Caco-2 (cell line): ENCODE measurements at regions of chr9 and their contacts with region 1.

Region 1: DNA sequence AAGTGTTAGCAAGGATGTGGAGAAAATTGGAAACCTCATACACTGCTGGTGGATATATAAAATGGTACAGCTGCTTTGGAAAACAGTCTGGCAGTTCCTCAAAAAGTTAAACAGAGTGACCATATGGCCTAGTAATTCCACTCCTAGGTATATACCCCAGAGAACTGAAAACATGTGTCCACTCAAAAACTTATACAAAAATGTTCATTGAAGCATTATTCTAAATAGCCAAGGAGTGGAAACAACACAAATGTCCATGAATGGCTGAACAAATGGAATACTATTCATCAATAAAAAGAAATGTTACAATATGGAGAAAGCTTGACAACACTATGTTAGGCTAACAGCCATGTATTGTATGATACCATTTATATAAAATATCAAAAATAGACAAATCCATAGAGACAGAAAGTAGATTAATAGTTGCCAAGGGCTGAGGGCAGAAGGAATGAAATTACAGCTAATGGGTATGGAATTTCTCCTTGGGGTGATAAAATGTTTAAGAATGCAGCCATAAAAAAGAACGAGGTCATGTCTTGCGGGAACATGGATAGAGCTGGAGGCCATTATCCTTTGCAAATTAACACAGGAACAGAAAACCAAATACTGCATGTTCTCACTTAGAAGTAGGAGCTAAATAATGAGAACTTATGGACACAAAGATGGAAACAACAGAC is 33.6 kb upstream of the FBP1 start:
- DNase-seq: no peak
- H3K4me3 ChIP-seq: no peak overlapping the region
- H3K4me3 Mint-ChIP-seq: no peak overlapping the region
- H3K27ac Mint-ChIP-seq: peak overlapping the region; percentile 27
- H3K4me1 ChIP-seq: peaks cover 32% of the 10 kb centered on the region
- H3K4me1 Mint-ChIP-seq: peaks cover 21% of the 10 kb centered on the region
- H3K27me3 ChIP-seq: no peaks in the 10 kb centered on the region
- H3K27me3 Mint-ChIP-seq: no peaks in the 10 kb centered on the region
- CTCF ChIP-seq: no peak

Region 2: GRCh38 chr9:94726495-94727191 is 53.7 kb after region 1 on chr9 and contains the start of gene AOPEP:
- CTCF ChIA-PET with region 1: interaction called, 13 read pairs
- POLR2A ChIA-PET with region 1: interaction called, 9 read pairs
- intact Hi-C with region 1: no loop called
- DNase-seq: peak; percentile 98 to 99
- H3K4me3 ChIP-seq: peak within 1 kb of the TSS; percentile 72
- H3K4me3 Mint-ChIP-seq: peak within 1 kb of the TSS; percentile 98
- H3K27ac Mint-ChIP-seq: peak within 1 kb of the TSS; percentile 94
- H3K4me1 ChIP-seq: no peaks in the 10 kb centered on the region
- H3K4me1 Mint-ChIP-seq: peaks cover 5% of the 10 kb centered on the region
- H3K27me3 ChIP-seq: no peaks in the 10 kb centered on the region
- H3K27me3 Mint-ChIP-seq: no peaks in the 10 kb centered on the region
- CTCF ChIP-seq: no peak
- total RNA-seq, gene AOPEP: 61.7 and 63.3 TPM in 2 replicates

Region 3: DNA sequence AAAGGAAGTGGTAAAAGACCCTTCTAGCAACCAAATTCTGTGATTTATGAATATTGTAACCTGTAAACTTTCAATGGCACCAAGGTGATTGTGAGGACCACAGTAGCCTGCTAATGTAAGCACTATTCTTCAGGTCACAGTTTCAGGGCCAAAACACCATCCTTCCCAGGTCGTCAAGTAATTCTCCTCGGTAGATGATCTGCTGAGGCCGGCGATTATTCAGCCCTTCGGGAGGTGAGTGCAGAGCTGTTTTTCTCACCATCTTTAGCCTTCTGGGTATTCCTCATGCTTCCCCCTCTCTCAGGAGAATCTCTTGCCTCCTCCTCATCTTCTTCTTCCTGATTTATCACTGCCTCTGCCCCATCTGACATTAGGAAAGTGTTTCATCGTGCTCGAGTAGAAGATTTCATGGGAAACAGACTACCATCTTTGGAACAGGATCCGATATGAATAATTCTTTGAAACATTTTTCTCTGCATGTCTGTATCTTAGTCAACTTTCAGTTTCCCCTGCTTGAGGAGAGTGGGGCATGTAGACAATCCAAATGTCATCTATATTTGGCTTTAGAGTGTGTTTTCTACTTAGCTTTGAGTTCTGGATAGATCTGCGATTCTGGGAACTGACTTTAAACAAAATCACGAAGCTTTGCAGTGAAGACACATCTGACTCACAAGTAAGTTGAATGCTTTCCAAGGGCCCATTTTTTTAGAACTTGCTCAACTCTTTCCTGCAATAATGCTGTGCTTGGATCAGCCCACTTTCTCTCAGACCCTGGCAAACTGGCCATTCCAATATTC is 227.5 kb after region 1 on chr9:
- CTCF ChIA-PET with region 1: no interaction called
- POLR2A ChIA-PET with region 1: no interaction called
- intact Hi-C with region 1: no loop called
- DNase-seq: no peak
- H3K4me3 ChIP-seq: no peak overlapping the region
- H3K4me3 Mint-ChIP-seq: no peak overlapping the region
- H3K27ac Mint-ChIP-seq: no peak overlapping the region
- H3K4me1 ChIP-seq: peaks cover 29% of the 10 kb centered on the region
- H3K4me1 Mint-ChIP-seq: peaks cover 17% of the 10 kb centered on the region
- H3K27me3 ChIP-seq: no peaks in the 10 kb centered on the region
- H3K27me3 Mint-ChIP-seq: no peaks in the 10 kb centered on the region
- CTCF ChIP-seq: no peak

Region 4: GRCh38 chr9:95055851-95056551 is 383.1 kb after region 1 on chr9:
- CTCF ChIA-PET with region 1: interaction called, 8 read pairs
- POLR2A ChIA-PET with region 1: no interaction called
- intact Hi-C with region 1: loop called (anchors 5 kb)
- DNase-seq: no peak
- H3K4me3 ChIP-seq: no peak overlapping the region
- H3K4me3 Mint-ChIP-seq: no peak overlapping the region
- H3K27ac Mint-ChIP-seq: peak overlapping the region; percentile 90
- H3K4me1 ChIP-seq: peaks cover 28% of the 10 kb centered on the region
- H3K4me1 Mint-ChIP-seq: peaks cover 44% of the 10 kb centered on the region
- H3K27me3 ChIP-seq: no peaks in the 10 kb centered on the region
- H3K27me3 Mint-ChIP-seq: no peaks in the 10 kb centered on the region
- CTCF ChIP-seq: no peak

Region 5: DNA sequence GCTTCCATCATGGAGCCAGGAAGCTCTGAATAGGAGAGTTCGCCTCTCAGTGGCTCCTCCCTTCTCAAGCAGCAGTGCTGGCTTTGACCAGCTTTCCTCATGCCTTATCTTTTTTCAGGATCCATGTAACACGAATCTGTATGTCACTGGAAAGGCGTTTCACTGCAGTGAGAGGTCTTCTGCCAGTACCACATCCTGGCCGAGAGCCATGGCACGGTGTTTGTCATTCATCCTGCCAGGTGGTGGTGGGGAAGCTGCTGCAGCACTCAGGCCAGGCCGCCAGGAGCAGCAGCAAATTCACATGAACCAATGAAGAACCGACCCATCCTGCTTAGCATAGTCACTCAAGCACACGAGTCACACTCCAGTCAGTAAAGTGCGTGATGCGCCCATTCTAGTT is 465.5 kb after region 1 on chr9:
- CTCF ChIA-PET with region 1: interaction called, 11 read pairs
- POLR2A ChIA-PET with region 1: no interaction called
- intact Hi-C with region 1: no loop called
- DNase-seq: no peak
- H3K4me3 ChIP-seq: no peak overlapping the region
- H3K4me3 Mint-ChIP-seq: no peak overlapping the region
- H3K27ac Mint-ChIP-seq: no peak overlapping the region
- H3K4me1 ChIP-seq: no peaks in the 10 kb centered on the region
- H3K4me1 Mint-ChIP-seq: no peaks in the 10 kb centered on the region
- H3K27me3 ChIP-seq: no peaks in the 10 kb centered on the region
- H3K27me3 Mint-ChIP-seq: no peaks in the 10 kb centered on the region
- CTCF ChIP-seq: no peak